Activated CD4-positive, alpha-beta T cell treated with anti-CD3 and anti-CD28 coated beads, Interleukin-2, amount 10 ng/mL, durations not matched to agents 7 days and 5 days (primary cell): ENCODE measurements at regions of chr16 and their contacts with region 1.

Region 1: DNA sequence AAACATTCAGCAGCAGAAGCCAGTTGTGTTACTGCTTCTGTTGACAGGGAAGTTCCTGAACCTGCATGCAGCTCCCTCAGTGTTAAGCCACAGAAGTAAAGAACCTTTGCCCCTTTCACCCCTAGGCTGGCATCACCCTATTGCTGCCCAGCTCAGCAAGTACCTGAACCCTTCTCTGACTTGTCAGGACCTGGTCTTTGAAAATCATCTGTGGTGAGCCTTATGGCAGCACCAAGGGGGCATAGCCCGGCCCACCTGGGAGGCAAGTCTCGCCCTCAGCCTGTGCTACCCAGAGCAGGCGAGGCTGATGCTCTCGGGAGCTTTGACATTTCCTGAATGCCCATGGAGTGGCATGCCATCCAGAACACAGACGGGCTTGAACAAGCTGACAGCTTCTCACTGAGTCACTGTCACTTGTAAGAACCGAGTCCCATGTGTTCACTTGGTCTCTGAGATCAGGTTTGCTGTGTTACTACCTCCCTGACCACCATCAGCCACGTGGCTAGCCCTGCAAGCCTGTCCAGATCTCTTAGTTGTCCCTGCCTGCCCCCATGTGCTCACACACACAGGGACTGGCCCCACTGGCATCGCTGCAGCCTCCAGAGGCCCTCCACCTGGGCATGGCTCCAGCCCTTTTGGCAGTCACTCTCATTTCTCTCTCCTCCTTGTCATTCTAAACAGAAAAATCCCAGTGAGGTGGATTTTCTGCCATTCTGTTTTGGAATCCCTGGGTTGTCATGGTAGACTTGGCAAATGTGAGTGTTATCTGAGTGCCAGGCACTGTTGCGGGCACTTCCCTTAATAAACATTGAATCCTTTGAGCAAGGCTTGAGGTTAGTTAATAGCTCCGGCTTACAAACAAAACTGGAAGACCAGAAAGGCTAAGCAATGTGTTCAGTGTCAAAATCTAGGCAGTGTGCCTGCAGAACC is 2.9 kb upstream of the CARMIL2 start:
- DNase-seq: no peak
- H3K4me3 Mint-ChIP-seq: no peak overlapping the region
- H3K27ac Mint-ChIP-seq: no peak overlapping the region
- H3K4me1 Mint-ChIP-seq: peaks cover 16% of the 10 kb centered on the region
- H3K27me3 Mint-ChIP-seq: no peaks in the 10 kb centered on the region

Region 2: GRCh38 chr16:67555795-67556212 is 86.2 kb before region 1 on chr16:
- CTCF ChIA-PET with region 1: interaction called, 43 read pairs
- POLR2A ChIA-PET with region 1: no interaction called
- DNase-seq: peak; percentile 30
- H3K4me3 Mint-ChIP-seq: peak overlapping the region; percentile 62
- H3K27ac Mint-ChIP-seq: peak overlapping the region; percentile 100
- H3K4me1 Mint-ChIP-seq: peaks cover 57% of the 10 kb centered on the region
- H3K27me3 Mint-ChIP-seq: no peaks in the 10 kb centered on the region

Region 3: DNA sequence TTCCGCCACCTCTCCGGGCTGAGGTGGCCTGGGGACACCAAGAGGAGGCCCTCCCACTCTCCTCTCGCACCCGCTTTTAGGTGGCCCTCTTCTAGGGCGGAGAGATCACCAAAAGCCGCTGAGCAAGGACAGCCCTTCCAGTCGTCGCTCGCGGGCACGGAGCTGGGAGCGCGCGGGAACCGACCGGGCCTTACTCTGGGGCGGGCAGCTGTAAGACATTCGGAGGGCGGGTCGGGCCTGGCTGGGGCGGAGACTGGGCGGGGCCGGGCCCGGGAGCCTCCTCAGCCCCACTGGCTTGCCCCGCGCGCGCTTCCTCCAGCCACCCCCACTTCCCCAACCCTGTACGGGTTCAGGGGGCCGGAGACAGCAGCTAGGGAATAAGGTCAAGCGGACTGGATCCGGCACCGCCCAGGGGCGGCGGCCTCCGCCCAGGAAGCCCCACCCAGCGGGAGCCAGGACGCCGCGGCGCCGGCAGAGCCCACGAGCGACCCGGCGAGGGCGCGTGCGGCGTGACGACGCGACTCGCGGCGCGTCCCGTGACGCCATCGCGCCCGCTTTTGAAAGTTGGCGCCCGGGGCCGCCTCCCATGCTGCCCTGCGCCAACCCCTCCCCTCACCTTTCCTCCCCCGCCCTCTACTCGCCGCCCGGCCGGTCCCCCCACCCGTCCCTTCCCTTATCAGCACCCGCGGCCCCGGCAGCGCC is 80.1 kb before region 1 on chr16:
- CTCF ChIA-PET with region 1: interaction called, 43 read pairs
- POLR2A ChIA-PET with region 1: no interaction called
- DNase-seq: peak; percentile 99
- H3K4me3 Mint-ChIP-seq: peak overlapping the region; percentile 87
- H3K27ac Mint-ChIP-seq: peak overlapping the region; percentile 97
- H3K4me1 Mint-ChIP-seq: peaks cover 47% of the 10 kb centered on the region
- H3K27me3 Mint-ChIP-seq: no peaks in the 10 kb centered on the region